ENCODE measurements at regions of chr2 and their contacts with region 1.

Region 1: GRCh38 chr2:241149925-241150659 is at the start of gene PPP1R7:
- DNase-seq: peak; percentile 88 to 96 (median 92)
- H3K4me3 ChIP-seq: peak within 1 kb of the TSS; percentile 76 to 100 (median 97)
- H3K27ac ChIP-seq: peak within 1 kb of the TSS in 58 of 59 donors; percentile 11 to 97 (median 88)
- H3K27me3 ChIP-seq: no peaks in the 10 kb centered on the region
- CTCF ChIP-seq: peak in 31 of 56 donors; percentile 6 to 53 (median 24)
- total RNA-seq, gene PPP1R7: 55.3 to 138 (median 99.6) TPM

Region 2: GRCh38 chr2:241102239-241102803 is 47.8 kb before region 1 on chr2 and contains the start of gene MTERF4:
- intact Hi-C with region 1: loop called (anchors 5 kb)
- DNase-seq: peak; percentile 74 to 93 (median 86)
- H3K4me3 ChIP-seq: peak within 1 kb of the TSS; percentile 67 to 99 (median 94)
- H3K27ac ChIP-seq: peak within 1 kb of the TSS; percentile 41 to 97 (median 83)
- H3K27me3 ChIP-seq: no peaks in the 10 kb centered on the region
- CTCF ChIP-seq: peak in 31 of 56 donors; percentile 3 to 59 (median 29)
- total RNA-seq, gene MTERF4: 34.2 to 84.6 (median 58.4) TPM

Region 3: DNA sequence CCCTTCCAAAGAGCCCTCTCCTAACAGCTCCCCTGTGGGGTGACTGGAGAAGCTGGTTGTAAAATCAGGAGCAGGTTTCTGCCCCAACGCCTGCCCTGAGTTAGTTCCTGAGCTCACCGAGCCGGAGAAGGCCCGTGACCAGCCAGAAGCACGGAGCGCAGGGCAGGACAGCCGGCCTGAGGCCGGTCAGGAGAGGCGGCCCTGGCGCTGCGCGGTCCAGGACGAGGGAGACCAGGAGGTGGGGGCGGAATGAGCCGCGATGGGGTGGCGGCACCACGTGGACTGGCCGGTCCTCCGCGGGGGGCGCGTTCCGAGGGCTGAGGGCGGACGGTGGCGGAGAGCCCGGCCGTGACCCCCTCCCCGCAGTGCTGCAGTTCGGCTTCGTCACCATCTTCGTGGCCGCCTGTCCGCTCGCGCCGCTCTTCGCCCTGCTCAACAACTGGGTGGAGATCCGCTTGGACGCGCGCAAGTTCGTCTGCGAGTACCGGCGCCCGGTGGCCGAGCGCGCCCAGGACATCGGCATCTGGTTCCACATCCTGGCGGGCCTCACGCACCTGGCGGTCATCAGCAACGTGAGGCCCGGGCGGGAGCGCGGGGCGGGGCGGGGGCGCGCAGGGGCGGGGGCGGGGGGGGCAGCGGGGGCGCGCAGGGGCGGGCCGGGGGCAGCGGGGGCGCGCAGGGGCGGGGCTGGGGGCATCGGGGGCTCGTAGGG is 67.4 kb after region 1 on chr2:
- intact Hi-C with region 1: loop called in 1 of 2 experiments (anchors 2 kb)
- DNase-seq: peak; percentile 53 to 80 (median 66)
- H3K4me3 ChIP-seq: peak overlapping the region; percentile 43 to 81 (median 65)
- H3K27ac ChIP-seq: peak overlapping the region; percentile 51 to 97 (median 90)
- H3K27me3 ChIP-seq: no peaks in the 10 kb centered on the region
- CTCF ChIP-seq: peak in 19 of 56 donors; percentile 7 to 43 (median 23)

Region 4: GRCh38 chr2:241271641-241272297 is 121.7 kb after region 1 on chr2:
- intact Hi-C with region 1: loop called in 1 of 2 experiments (anchors 10 kb)
- DNase-seq: peak; percentile 70 to 89 (median 85)
- H3K4me3 ChIP-seq: peak overlapping the region; percentile 54 to 94 (median 80)
- H3K27ac ChIP-seq: peak overlapping the region in 53 of 59 donors; percentile 46 to 93 (median 81)
- H3K27me3 ChIP-seq: no peaks in the 10 kb centered on the region
- CTCF ChIP-seq: peak in 1 of 56 donors; percentile 29